CD8-positive, alpha-beta memory T cell (primary cell): ENCODE measurements at regions of chr15 and their contacts with region 1.

Region 1: DNA sequence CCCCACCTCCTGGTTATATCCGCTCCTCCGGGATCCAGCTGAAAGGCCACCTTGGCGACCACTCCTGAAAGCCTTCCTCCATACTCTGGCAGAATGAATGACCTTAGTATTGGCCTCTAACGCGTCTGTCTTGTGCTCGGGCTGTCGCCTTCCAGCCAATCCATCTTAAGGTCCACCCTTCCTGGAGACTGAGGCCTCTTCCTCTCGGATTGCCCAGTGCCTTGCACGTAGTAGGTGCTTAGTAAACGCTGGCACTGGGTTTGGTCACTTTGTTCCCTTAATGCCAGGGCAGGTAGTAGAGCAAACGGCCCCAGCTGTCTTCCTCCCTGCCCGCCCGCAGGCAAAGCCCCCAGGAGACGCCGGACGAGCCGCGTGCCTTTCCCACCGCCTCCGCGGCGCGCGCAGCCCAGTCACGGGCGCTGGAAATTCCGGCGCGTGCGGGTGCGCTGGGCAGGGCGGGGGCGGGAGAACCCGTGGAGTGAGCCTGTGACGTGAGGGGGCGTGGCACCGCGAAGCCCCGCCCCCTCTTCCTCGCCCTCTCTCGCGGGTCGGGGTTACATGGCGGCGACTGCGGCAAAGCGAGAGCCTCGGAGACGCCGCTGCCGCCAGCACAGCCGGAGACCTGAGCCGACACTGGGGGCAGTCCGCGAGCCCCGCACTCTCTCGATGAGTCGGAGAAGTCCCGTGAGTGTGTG is at the start of gene MAPK6:
- DNase-seq: peak; percentile 92 to 95 (median 93)
- H3K4me3 ChIP-seq: peak within 1 kb of the TSS; percentile 84
- H3K4me3 Mint-ChIP-seq: peak within 1 kb of the TSS; percentile 92 to 99 (median 96)
- H3K27ac ChIP-seq: peak within 1 kb of the TSS; percentile 85
- H3K27ac Mint-ChIP-seq: peak within 1 kb of the TSS; percentile 88 to 99 (median 98)
- H3K4me1 ChIP-seq: peaks cover 30% of the 10 kb centered on the region
- H3K4me1 Mint-ChIP-seq: peaks cover 30 to 43% (median 42%) of the 10 kb centered on the region in 3 donors
- H3K27me3 ChIP-seq: no peaks in the 10 kb centered on the region
- H3K27me3 Mint-ChIP-seq: peaks cover 0 to 3% of the 10 kb centered on the region in 2 donors
- total RNA-seq, gene MAPK6: 97.6 to 103 TPM

Region 2: DNA sequence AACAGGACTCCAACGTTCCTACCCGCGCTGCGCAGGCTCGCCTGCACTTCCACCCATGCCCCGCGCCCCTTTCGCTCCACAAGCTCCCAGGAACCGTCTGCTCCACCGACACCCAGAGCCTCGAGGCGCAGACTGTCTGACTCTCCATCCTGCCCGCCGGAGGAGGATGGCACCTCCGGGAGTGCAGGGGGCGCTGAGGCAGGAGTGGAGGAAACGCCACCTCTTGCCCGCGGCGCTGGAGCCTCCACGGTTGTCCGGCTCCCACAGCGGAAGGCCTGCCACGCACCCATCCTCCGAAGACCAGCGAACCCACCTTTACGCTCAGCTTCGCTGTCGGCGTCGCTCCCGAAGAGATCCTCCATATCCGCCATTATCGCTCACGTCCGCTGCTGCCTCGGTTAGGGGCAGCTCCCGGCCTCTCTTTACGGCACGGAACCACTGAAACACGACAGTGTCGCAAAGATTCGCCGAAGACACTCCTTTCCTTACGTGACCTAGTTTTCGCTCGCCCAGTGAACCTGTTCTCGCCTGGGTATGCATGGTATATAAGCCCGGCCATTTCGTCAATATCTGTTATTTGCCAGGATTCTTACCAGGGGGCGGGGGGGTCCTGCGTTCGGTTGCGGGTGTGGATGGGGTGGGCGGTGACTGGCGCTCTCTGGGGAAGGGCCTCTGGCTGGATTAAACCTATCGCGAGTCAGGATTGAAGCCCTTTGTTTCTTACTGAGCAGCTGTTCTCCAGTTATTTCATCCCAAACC is 47.3 kb before region 1 on chr15 and contains the start of gene LEO1:
- CTCF ChIA-PET with region 1: no interaction called
- POLR2A ChIA-PET with region 1: interaction called, 11 read pairs
- DNase-seq: peak; percentile 80 to 94 (median 92)
- H3K4me3 ChIP-seq: peak within 1 kb of the TSS; percentile 70
- H3K4me3 Mint-ChIP-seq: peak within 1 kb of the TSS; percentile 94 to 98 (median 96)
- H3K27ac ChIP-seq: peak within 1 kb of the TSS; percentile 70
- H3K27ac Mint-ChIP-seq: peak within 1 kb of the TSS; percentile 91 to 99 (median 96)
- H3K4me1 ChIP-seq: peaks cover 13% of the 10 kb centered on the region
- H3K4me1 Mint-ChIP-seq: peaks cover 26 to 27% (median 27%) of the 10 kb centered on the region in 3 donors
- H3K27me3 ChIP-seq: no peaks in the 10 kb centered on the region
- H3K27me3 Mint-ChIP-seq: peaks cover 0 to 4% of the 10 kb centered on the region in 2 donors
- total RNA-seq, gene LEO1: 36.0 to 38.2 TPM

Region 3: GRCh38 chr15:52039925-52040781 is 21.3 kb after region 1 on chr15:
- CTCF ChIA-PET with region 1: interaction called, 4 read pairs
- POLR2A ChIA-PET with region 1: interaction called, 14 read pairs
- DNase-seq: no peak
- H3K4me3 ChIP-seq: no peak overlapping the region
- H3K4me3 Mint-ChIP-seq: peak overlapping the region in 1 of 7 donors; percentile 12
- H3K27ac ChIP-seq: no peak overlapping the region
- H3K27ac Mint-ChIP-seq: peak overlapping the region in 7 of 8 donors; percentile 21 to 66 (median 35)
- H3K4me1 ChIP-seq: peaks cover 30% of the 10 kb centered on the region
- H3K4me1 Mint-ChIP-seq: peaks cover 50 to 75% (median 69%) of the 10 kb centered on the region in 3 donors
- H3K27me3 ChIP-seq: no peaks in the 10 kb centered on the region
- H3K27me3 Mint-ChIP-seq: no peaks in the 10 kb centered on the region

Region 4: GRCh38 chr15:52139599-52140491 is 121.0 kb after region 1 on chr15:
- CTCF ChIA-PET with region 1: no interaction called
- POLR2A ChIA-PET with region 1: no interaction called
- DNase-seq: peak; percentile 27 to 61 (median 46)
- H3K4me3 ChIP-seq: no peak overlapping the region
- H3K4me3 Mint-ChIP-seq: no peak overlapping the region
- H3K27ac ChIP-seq: no peak overlapping the region
- H3K27ac Mint-ChIP-seq: peak overlapping the region in 3 of 8 donors; percentile 22 to 84 (median 61)
- H3K4me1 ChIP-seq: peaks cover 24% of the 10 kb centered on the region
- H3K4me1 Mint-ChIP-seq: peaks cover 21 to 33% (median 31%) of the 10 kb centered on the region in 3 donors
- H3K27me3 ChIP-seq: no peaks in the 10 kb centered on the region
- H3K27me3 Mint-ChIP-seq: peaks cover 0 to 2% of the 10 kb centered on the region in 2 donors

Region 5: GRCh38 chr15:52179278-52180195 is 160.7 kb after region 1 on chr15:
- CTCF ChIA-PET with region 1: no interaction called
- POLR2A ChIA-PET with region 1: interaction called, 22 read pairs
- DNase-seq: peak; percentile 78 to 92 (median 88)
- H3K4me3 ChIP-seq: peak overlapping the region; percentile 66
- H3K4me3 Mint-ChIP-seq: peak overlapping the region; percentile 91 to 98 (median 92)
- H3K27ac ChIP-seq: peak overlapping the region; percentile 99
- H3K27ac Mint-ChIP-seq: peak overlapping the region; percentile 91 to 100 (median 98)
- H3K4me1 ChIP-seq: peaks cover 20% of the 10 kb centered on the region
- H3K4me1 Mint-ChIP-seq: peaks cover 33 to 54% (median 43%) of the 10 kb centered on the region in 3 donors
- H3K27me3 ChIP-seq: no peaks in the 10 kb centered on the region
- H3K27me3 Mint-ChIP-seq: no peaks in the 10 kb centered on the region